Activated B cell treated with CpG ODN at 0.5 μM for 24 hours (primary cell): ENCODE measurements at regions of chr2 and their contacts with region 1.

Region 1: GRCh38 chr2:74482801-74483674 is at the starts of genes CCDC142 and TTC31:
- DNase-seq: peak; percentile 83
- ATAC-seq: peak; percentile 92
- H3K4me3 Mint-ChIP-seq: peak within 1 kb of the TSS; percentile 100
- H3K27ac Mint-ChIP-seq: peak within 1 kb of the TSS; percentile 100
- H3K4me1 Mint-ChIP-seq: peaks cover 30% of the 10 kb centered on the region
- H3K27me3 Mint-ChIP-seq: no peaks in the 10 kb centered on the region
- CTCF ChIP-seq: peak; percentile 23
- total RNA-seq, gene CCDC142: 29.3 and 40.4 TPM in 2 replicates
- total RNA-seq, gene TTC31: 41.9 and 49.1 TPM in 2 replicates

Region 2: GRCh38 chr2:74421221-74421870 is 61.7 kb before region 1 on chr2 and contains the starts of genes C2orf81 and WDR54:
- CTCF ChIA-PET with region 1: no interaction called
- POLR2A ChIA-PET with region 1: no interaction called
- intact Hi-C with region 1: loop called (anchors 1 kb)
- DNase-seq: peak; percentile 97
- ATAC-seq: peak; percentile 88
- H3K4me3 Mint-ChIP-seq: peak within 1 kb of the TSS; percentile 99
- H3K27ac Mint-ChIP-seq: peak within 1 kb of the TSS; percentile 96
- H3K4me1 Mint-ChIP-seq: peaks cover 44% of the 10 kb centered on the region
- H3K27me3 Mint-ChIP-seq: no peaks in the 10 kb centered on the region
- CTCF ChIP-seq: no peak
- total RNA-seq, gene C2orf81: 3.9 and 5.5 TPM in 2 replicates
- total RNA-seq, gene WDR54: 32.3 and 33.5 TPM in 2 replicates

Region 3: DNA sequence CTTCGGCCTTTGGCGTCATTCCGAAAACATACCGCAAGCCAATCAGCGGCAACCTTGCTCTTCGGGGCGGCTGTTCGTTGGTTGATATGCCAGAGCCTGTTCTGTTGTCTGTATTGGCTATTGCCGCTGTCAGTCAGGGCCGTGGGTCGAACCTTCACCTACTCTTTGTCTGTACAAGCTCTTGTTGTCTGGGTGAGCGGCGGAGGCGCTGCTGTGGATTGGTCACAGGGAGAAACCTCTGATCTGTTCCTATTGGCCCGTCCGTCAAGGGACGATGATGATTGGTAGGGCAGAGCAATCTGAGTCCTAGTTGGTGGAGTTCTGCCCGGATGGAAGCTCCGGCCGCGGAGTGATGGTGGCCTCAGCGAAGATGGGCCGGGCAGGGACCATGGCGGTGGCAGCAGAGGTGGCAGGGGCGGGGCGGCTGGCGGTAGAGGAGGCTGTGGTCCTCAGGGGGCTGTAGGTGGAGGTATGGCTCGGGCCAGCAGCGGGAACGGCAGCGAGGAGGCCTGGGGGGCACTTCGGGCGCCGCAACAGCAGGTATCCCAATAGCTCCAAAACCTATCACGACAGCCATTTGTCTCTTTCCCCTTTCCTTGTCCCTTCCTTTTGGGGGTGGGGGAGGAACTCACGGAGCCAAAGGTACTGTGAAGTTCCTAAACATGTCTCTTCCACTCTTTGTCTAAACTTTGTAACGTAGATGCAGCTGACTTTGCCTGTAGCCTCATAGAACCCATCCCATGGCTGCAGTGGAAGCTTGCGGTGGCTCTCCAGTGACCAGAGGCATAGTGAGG is 24.7 kb before region 1 on chr2 and contains the start of gene WBP1:
- CTCF ChIA-PET with region 1: interaction called, 7 read pairs
- POLR2A ChIA-PET with region 1: interaction called, 78 read pairs
- intact Hi-C with region 1: loop called (anchors 1 kb)
- DNase-seq: peak; percentile 87
- ATAC-seq: peak; percentile 81
- H3K4me3 Mint-ChIP-seq: peak within 1 kb of the TSS; percentile 99
- H3K27ac Mint-ChIP-seq: peak within 1 kb of the TSS; percentile 100
- H3K4me1 Mint-ChIP-seq: peaks cover 62% of the 10 kb centered on the region
- H3K27me3 Mint-ChIP-seq: no peaks in the 10 kb centered on the region
- CTCF ChIP-seq: no peak
- total RNA-seq, gene WBP1: 61.4 and 65.3 TPM in 2 replicates

Region 4: DNA sequence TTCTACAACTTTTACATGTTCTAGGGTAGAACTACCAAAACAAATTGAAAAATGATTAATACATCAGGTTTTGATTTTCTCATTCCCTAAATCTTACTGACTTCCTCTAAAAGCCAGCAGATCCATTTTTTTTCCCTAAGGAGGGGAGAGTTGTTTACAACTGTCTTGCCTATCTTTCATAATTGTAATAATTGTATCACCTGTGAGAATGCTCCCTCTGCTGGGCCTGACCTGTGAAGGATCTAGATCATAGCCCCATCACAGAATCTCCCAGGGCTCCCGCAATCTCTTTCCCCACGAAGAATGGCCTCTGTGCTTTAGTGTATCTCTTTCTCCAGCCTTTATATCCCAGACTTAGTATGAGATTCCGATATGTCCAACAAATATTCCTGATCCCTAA is 61.6 kb after region 1 on chr2:
- CTCF ChIA-PET with region 1: interaction called, 14 read pairs
- POLR2A ChIA-PET with region 1: interaction called, 4 read pairs
- intact Hi-C with region 1: loop called (anchors 1 kb)
- DNase-seq: no peak
- ATAC-seq: no peak
- H3K4me3 Mint-ChIP-seq: no peak overlapping the region
- H3K27ac Mint-ChIP-seq: no peak overlapping the region
- H3K4me1 Mint-ChIP-seq: peaks cover 19% of the 10 kb centered on the region
- H3K27me3 Mint-ChIP-seq: peaks cover 14% of the 10 kb centered on the region
- CTCF ChIP-seq: no peak

Region 5: GRCh38 chr2:74573747-74574562 is 90.9 kb after region 1 on chr2:
- CTCF ChIA-PET with region 1: interaction called, 4 read pairs
- POLR2A ChIA-PET with region 1: interaction called, 5 read pairs
- intact Hi-C with region 1: loop called (anchors 5 kb)
- DNase-seq: no peak
- ATAC-seq: peak; percentile 67
- H3K4me3 Mint-ChIP-seq: peak overlapping the region; percentile 53
- H3K27ac Mint-ChIP-seq: peak overlapping the region; percentile 89
- H3K4me1 Mint-ChIP-seq: peaks cover 39% of the 10 kb centered on the region
- H3K27me3 Mint-ChIP-seq: no peaks in the 10 kb centered on the region
- CTCF ChIP-seq: no peak

Region 6: DNA sequence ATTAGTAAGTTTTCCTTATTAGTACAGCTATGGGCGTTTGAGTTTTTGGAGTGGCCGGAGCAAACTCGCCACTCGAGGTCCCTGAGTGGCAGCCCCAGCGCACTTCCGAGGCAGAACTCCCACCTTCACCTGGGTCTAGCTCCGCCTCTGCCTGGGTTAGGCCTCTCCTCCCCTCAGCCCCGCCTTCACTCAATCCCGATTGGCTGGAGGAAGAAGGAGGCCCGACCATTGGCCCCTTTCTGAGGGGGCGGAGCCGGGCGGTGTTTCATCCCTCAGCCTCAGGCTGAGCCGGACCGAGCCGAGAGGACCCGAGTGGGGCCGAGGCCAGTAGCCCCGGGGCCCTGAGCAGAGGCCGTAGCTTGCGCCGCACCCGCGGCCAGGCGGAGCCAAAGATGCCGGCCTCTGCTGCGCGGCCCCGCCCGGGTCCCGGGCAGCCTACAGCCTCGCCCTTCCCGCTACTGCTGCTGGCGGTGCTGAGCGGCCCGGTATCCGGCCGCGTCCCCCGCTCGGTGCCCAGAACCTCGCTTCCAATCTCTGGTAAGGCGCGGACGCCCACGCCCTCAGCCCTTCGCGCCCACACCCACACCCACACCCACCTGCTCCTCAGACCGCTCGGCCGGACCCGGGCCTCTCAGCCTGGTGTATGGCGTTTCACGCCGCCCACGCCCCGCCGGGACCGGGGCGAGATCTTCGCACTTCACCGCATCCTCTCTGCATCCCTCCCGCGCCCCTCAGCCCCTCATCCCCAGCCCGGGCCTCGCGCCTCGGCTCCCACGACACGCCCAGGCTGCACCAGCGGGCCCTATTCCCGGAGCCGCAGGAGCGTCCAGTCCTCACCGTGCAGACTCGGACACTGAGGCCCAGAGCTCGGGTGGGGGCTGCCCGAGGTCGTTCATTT is 171.2 kb after region 1 on chr2 and contains the start of gene SEMA4F:
- CTCF ChIA-PET with region 1: no interaction called
- POLR2A ChIA-PET with region 1: no interaction called
- intact Hi-C with region 1: no loop called
- DNase-seq: peak; percentile 92
- ATAC-seq: peak; percentile 99
- H3K4me3 Mint-ChIP-seq: peak within 1 kb of the TSS; percentile 91
- H3K27ac Mint-ChIP-seq: peak within 1 kb of the TSS; percentile 82
- H3K4me1 Mint-ChIP-seq: peaks cover 16% of the 10 kb centered on the region
- H3K27me3 Mint-ChIP-seq: peaks cover 9% of the 10 kb centered on the region
- CTCF ChIP-seq: no peak
- total RNA-seq, gene SEMA4F: 10.2 and 11.6 TPM in 2 replicates

Region 7: GRCh38 chr2:74876081-74876886 is 393.2 kb after region 1 on chr2:
- CTCF ChIA-PET with region 1: no interaction called
- POLR2A ChIA-PET with region 1: no interaction called
- intact Hi-C with region 1: loop called (anchors 1 kb)
- DNase-seq: peak; percentile 24
- ATAC-seq: peak; percentile 69
- H3K4me3 Mint-ChIP-seq: no peak overlapping the region
- H3K27ac Mint-ChIP-seq: no peak overlapping the region
- H3K4me1 Mint-ChIP-seq: no peaks in the 10 kb centered on the region
- H3K27me3 Mint-ChIP-seq: no peaks in the 10 kb centered on the region
- CTCF ChIP-seq: peak; percentile 41